ENCODE measurements at regions of chr4 and their contacts with region 1.

Region 1: GRCh38 chr4:112655270-112655669 is 18.3 kb downstream of the LARP7 start:
- DNase-seq: no peak
- H3K4me3 Mint-ChIP-seq: no peak overlapping the region
- H3K27ac Mint-ChIP-seq: no peak overlapping the region
- H3K4me1 Mint-ChIP-seq: no peaks in the 10 kb centered on the region
- H3K27me3 Mint-ChIP-seq: no peaks in the 10 kb centered on the region

Region 2: DNA sequence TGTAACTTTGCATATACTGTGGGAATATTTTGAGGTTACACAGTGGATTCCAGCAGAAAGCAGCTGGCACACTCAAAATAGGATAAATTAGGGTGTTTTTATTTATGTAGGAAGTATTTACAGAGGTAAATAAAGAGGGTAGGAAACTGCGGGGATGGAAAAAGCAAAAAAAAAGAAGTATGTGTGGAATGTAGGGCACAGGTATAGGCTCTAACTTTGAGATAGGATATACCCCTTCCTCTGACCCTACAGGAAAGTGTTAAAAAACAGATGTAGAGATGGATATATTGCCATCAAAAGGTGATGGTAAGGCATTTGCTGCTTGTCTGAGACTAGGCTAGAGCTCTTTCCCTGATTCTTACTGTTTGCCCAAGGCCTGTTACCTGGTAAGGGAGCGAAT is 221.0 kb after region 1 on chr4:
- CTCF ChIA-PET with region 1: no interaction called
- POLR2A ChIA-PET with region 1: interaction called, 15 read pairs
- DNase-seq: no peak
- H3K4me3 Mint-ChIP-seq: no peak overlapping the region
- H3K27ac Mint-ChIP-seq: no peak overlapping the region
- H3K4me1 Mint-ChIP-seq: no peaks in the 10 kb centered on the region
- H3K27me3 Mint-ChIP-seq: peaks cover 4% of the 10 kb centered on the region

Measured in activated CD4-positive, alpha-beta T cell treated with anti-CD3 and anti-CD28 coated beads, Interleukin-2, amount 10 ng/mL, durations not matched to agents 7 days and 5 days (primary cell).